Breast epithelium (tissue), 4 donors: ENCODE measurements at regions of chr21 and their contacts with region 1.

Region 1: GRCh38 chr21:21612466-21612865 is 614.3 kb downstream of the NCAM2 start:
- DNase-seq: no peak
- H3K4me3 ChIP-seq: no peak overlapping the region
- H3K27ac ChIP-seq: no peak overlapping the region
- H3K4me1 ChIP-seq: no peaks in the 10 kb centered on the region
- H3K27me3 ChIP-seq: no peaks in the 10 kb centered on the region
- CTCF ChIP-seq: no peak
- POLR2A ChIP-seq: no peak

Region 2: DNA sequence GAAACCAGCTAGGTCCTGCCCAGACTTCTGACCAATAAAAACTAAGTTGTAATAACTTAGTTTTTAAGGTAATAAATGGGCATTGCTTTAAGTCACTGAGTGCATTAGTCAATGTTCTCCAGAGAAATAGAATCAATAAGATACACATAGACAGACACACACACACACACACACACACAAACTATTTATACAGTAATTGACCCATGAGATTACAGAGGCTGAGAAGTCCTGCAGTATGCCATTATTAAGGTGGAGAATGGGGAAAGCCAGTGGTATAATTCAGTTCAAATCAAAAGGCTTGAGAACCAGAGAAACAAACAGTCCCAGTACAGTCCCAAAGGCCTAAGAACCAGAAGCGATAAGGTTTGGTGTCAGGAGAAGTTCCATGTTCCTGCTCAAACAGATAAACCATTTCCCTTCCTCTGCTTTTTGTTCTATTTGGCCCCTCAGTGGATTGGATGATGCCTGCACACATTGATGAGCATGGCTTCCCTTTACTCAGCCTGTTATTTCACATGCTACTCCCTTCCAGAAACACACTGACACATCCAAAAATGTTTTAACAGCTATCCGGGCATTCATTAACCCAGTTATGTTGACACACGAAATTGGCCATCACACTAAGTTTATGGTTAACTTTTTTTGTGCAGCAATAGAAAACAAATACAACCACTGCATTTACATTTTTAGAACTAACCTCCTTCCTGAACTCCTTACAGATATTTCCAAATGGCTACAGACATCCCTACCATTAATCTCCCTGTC is 1442.5 kb before region 1 on chr21:
- intact Hi-C with region 1: loop called (anchors 10 kb)
- DNase-seq: no peak
- H3K4me3 ChIP-seq: no peak overlapping the region
- H3K27ac ChIP-seq: no peak overlapping the region
- H3K4me1 ChIP-seq: no peaks in the 10 kb centered on the region
- H3K27me3 ChIP-seq: no peaks in the 10 kb centered on the region
- CTCF ChIP-seq: no peak
- POLR2A ChIP-seq: no peak